Dendritic cell treated with granulocyte-macrophage colony-stimulating factor and Interleukin-4, amounts not matched to agents 40 ng/mL and 50 ng/mL, for 4 days (primary cell): ENCODE measurements at regions of chr5 and their contacts with region 1.

Region 1: DNA sequence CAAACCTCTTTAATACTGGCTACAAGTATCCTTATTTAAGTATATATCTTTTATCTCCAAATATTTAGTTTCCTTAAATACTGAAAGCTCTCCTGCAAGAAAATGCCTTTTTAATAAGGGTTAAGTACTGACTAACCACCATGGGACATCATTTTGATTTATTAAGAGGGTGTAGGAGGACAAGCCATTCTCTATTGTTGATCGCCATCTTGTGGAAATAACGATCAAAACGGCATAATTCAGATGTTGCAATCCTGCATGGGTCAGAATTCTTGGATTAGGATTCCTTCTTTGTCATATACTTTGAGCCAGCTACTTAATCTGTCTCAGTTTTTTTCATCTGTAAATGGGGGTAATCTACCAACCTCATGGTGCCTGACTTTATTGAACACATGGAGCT is 28.7 kb upstream of the C5orf46 start:
- H3K4me3 Mint-ChIP-seq: no peak overlapping the region
- H3K27ac Mint-ChIP-seq: no peak overlapping the region
- H3K4me1 Mint-ChIP-seq: peaks cover 17% of the 10 kb centered on the region
- H3K27me3 Mint-ChIP-seq: no peaks in the 10 kb centered on the region

Region 2: GRCh38 chr5:147845618-147846017 is 89.4 kb before region 1 on chr5:
- intact Hi-C with region 1: no loop called
- H3K4me3 Mint-ChIP-seq: no peak overlapping the region
- H3K27ac Mint-ChIP-seq: no peak overlapping the region
- H3K4me1 Mint-ChIP-seq: no peaks in the 10 kb centered on the region
- H3K27me3 Mint-ChIP-seq: peaks cover 5% of the 10 kb centered on the region

Region 3: DNA sequence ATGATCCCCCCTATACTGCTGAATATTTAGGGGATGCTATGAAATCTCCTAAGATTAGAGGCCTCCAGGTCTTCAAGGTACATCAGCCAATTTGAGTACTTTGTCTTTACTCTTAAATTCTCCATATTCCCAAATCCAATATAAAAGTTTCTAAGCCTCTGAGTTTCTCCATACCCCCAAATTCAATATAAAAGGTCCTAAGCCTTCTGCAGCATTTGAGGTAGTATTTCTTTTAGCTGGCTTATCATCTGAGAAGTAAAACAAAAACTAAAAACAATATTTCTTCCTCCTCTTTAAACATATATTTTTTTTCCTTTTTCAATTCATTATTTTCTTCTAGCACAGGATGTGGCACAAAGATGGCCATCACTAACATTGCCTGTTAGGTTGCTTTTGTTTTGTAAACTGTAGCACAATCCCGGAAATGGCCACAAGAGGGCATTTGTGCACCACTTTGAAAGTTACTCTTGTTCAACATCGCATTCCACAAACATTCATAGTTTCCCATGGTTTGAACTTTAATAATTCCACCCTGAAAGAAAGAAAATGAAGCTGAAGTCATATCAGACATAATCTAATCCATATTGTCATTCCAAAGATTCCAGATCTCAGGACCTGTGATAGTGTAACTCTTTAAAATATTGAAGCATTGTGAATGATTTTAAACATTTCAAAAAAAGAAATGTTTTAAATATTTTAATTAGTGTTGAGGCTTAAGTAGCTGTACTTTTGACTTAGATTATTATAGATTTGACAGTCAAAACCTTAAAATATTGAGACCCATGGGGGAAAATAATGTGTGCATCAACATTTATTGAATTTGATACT is 77.5 kb before region 1 on chr5:
- intact Hi-C with region 1: loop called (anchors 1 kb)
- H3K4me3 Mint-ChIP-seq: no peak overlapping the region
- H3K27ac Mint-ChIP-seq: no peak overlapping the region
- H3K4me1 Mint-ChIP-seq: peaks cover 10% of the 10 kb centered on the region
- H3K27me3 Mint-ChIP-seq: no peaks in the 10 kb centered on the region

Region 4: GRCh38 chr5:147887024-147887627 is 47.9 kb before region 1 on chr5:
- intact Hi-C with region 1: loop called (anchors 1 kb)
- H3K4me3 Mint-ChIP-seq: no peak overlapping the region
- H3K27ac Mint-ChIP-seq: no peak overlapping the region
- H3K4me1 Mint-ChIP-seq: peaks cover 4% of the 10 kb centered on the region
- H3K27me3 Mint-ChIP-seq: peaks cover 2% of the 10 kb centered on the region